CD8-positive, alpha-beta T cell (primary cell): ENCODE measurements at regions of chr17 and their contacts with region 1.

Region 1: DNA sequence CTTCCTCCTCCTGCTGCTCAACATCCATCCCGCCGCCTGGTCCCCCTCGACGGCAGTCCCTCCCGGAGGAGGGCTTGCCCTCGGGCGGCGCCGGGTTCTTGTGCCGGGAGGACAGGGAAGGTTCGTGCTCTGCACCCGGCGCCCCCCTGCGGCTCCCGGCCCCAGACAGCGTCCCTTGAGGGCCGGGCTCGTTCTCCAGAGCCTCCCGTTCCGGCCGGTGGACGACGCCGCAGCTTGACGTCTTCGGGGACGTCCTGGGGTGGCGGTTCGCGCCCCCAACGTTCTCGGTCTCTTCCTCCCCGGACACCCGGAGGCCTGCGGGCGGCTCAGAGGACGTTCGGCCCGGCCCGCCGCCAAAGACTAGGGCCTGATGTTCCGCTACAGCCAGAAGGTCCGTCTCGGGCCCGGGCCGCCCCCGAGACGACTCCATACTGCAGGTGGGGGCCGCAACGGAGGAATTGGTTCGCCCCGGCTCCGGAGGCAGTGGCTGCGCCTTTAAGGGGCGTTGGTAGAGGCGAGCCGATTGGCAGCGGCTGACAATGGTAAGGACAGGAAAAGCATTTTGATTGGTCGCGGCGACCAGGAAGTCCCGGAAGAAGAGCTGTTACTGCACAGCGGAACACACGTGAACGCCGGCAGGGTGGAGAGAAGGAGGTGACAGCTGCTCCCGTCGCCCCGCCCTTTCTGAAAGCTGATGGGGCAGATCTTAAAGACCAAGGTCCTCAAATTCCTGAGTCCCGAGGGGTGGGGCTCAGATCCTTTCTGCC is at the start of gene BORCS6:
- DNase-seq: peak; percentile 87 to 99 (median 93)
- ATAC-seq: peak; percentile 69
- H3K4me3 ChIP-seq: peak within 1 kb of the TSS; percentile 95 to 98
- H3K4me3 Mint-ChIP-seq: peak within 1 kb of the TSS; percentile 1
- H3K27ac ChIP-seq: peak within 1 kb of the TSS; percentile 63 to 93
- H3K27ac Mint-ChIP-seq: peak within 1 kb of the TSS; percentile 94
- H3K4me1 ChIP-seq: peaks cover 38% of the 10 kb centered on the region
- H3K4me1 Mint-ChIP-seq: peaks cover 13% of the 10 kb centered on the region
- H3K27me3 ChIP-seq: no peaks in the 10 kb centered on the region
- H3K27me3 Mint-ChIP-seq: no peaks in the 10 kb centered on the region
- CTCF ChIP-seq: no peak
- total RNA-seq, gene BORCS6: 6.1 to 6.7 TPM

Region 2: DNA sequence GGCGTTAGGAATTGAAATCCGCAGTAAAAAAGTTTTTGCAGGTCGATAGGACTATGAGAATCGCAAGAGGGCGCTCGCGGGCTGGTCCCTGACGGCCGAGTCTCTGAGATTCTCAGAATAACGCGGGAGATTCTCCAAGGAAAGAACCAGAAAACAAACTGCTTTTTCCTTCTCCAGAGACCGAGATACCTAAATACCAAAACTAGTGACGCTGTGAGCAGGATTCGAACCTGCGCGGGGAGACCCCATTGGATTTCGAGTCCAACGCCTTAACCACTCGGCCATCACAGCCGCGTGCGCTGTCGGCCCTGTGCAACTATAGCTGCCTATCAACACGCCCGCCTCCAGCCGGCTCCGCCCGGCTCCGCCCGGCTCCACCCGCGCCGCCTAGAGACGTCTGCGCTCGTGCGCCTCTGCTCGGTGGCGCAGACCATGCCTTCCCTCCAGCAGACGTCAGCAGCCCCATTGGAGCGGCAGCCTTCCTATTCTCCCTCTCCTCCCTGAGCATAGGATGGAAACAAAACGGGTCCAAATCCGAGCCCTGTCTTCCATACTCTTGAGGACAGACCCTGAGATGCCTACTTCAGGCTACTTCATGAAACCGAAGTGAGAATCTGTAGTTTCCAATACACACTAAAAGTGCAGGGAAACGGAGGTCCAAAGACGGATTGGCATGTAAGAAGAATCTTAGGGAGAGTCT is 51.1 kb before region 1 on chr17:
- CTCF ChIA-PET with region 1: interaction called, 29 read pairs
- POLR2A ChIA-PET with region 1: interaction called, 15 read pairs
- intact Hi-C with region 1: loop called (anchors 1 kb)
- DNase-seq: peak; percentile 92 to 98 (median 95)
- ATAC-seq: peak; percentile 84
- H3K4me3 ChIP-seq: peak overlapping the region; percentile 70 to 75
- H3K4me3 Mint-ChIP-seq: no peak overlapping the region
- H3K27ac ChIP-seq: peak overlapping the region; percentile 89 to 97
- H3K27ac Mint-ChIP-seq: no peak overlapping the region
- H3K4me1 ChIP-seq: peaks cover 18% of the 10 kb centered on the region
- H3K4me1 Mint-ChIP-seq: no peaks in the 10 kb centered on the region
- H3K27me3 ChIP-seq: no peaks in the 10 kb centered on the region
- H3K27me3 Mint-ChIP-seq: no peaks in the 10 kb centered on the region
- CTCF ChIP-seq: peak; percentile 87

Region 3: DNA sequence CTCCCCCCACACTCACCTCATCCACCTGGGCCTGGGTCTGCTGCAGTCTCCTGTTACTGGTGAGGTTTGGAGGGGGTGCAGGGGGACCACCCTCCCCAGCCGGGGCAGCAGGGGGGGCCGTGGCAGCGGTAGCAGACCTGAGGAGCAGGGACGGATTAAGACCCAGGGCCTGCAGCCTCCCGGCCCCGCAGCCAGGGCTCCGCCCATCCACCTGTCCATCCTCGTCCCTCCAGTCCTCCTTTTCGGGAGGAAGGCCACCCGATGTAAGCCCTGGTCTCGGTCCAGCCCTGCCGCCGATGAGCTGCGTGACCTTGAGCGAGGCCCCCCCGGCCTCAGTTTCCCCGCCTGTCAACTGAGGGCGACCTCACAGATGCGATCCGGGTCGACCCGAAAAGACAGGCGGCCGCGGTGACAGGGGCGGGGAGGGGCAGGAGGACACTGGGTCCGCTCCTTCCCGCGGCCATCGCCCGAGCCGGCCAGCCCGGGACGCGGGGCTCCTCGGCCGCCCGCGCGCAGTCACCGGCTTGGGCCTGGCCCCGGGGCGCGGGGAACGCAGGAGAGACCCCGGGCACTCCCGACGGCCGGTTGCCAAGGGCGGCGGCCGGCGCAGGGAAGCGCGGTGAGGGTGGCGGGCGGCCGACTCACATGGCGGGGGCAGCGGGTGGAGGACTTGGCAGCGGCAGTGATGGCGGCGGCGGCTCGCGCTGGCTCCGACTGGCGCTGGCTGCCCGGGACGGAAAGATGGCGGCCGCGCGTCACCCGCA is 27.5 kb before region 1 on chr17 and contains the start of gene VAMP2:
- CTCF ChIA-PET with region 1: interaction called, 183 read pairs
- POLR2A ChIA-PET with region 1: interaction called, 32 read pairs
- intact Hi-C with region 1: loop called (anchors 1 kb)
- DNase-seq: peak; percentile 72 to 92 (median 83)
- ATAC-seq: peak; percentile 47
- H3K4me3 ChIP-seq: peak within 1 kb of the TSS; percentile 96 to 99
- H3K4me3 Mint-ChIP-seq: peak within 1 kb of the TSS; percentile 92
- H3K27ac ChIP-seq: peak within 1 kb of the TSS; percentile 99 to 100
- H3K27ac Mint-ChIP-seq: peak within 1 kb of the TSS; percentile 98
- H3K4me1 ChIP-seq: peaks cover 62% of the 10 kb centered on the region
- H3K4me1 Mint-ChIP-seq: peaks cover 64% of the 10 kb centered on the region
- H3K27me3 ChIP-seq: no peaks in the 10 kb centered on the region
- H3K27me3 Mint-ChIP-seq: no peaks in the 10 kb centered on the region
- CTCF ChIP-seq: no peak
- total RNA-seq, gene VAMP2: 302 to 303 TPM

Region 4: DNA sequence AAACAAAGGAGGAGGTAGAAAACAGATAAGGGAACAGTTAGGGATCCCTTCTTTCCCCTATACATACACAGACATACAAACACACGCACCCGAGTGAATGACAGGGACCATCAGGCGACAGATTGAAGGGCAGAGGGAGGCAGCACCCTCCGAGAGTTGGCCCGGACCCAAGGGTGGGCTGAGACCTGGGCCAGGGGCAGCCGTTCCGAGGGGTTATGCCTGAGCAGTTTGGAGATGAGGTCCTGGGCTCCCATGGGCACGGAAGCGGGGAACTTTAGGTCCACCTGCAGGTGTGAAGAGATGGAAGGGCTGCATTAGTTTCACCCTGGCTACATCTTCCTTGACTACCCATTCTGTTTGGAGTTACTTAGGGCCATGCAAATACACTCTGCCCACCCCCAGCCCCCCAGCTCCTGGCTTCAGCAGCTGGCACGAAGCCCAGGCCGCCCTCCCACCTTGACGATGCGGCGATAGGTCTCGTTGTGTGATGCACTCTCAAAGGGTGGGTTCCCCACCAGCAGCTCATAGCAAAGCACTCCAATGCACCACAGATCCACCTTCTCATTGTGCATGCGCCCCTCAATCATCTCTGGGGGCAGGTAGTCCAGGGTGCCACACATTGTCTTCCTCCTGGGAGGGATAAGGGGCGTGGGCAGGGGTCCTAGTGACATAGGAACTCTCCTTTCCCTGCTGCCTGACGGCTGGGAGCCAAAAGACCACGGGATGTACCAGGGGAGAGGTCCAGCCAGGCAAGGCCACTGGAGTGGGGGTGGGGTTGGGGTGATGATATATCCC is 15.1 kb after region 1 on chr17:
- CTCF ChIA-PET with region 1: interaction called, 5 read pairs
- POLR2A ChIA-PET with region 1: interaction called, 30 read pairs
- intact Hi-C with region 1: loop called (anchors 1 kb)
- DNase-seq: no peak
- ATAC-seq: no peak
- H3K4me3 ChIP-seq: no peak overlapping the region
- H3K4me3 Mint-ChIP-seq: no peak overlapping the region
- H3K27ac ChIP-seq: no peak overlapping the region
- H3K27ac Mint-ChIP-seq: no peak overlapping the region
- H3K4me1 ChIP-seq: peaks cover 2% of the 10 kb centered on the region
- H3K4me1 Mint-ChIP-seq: peaks cover 7% of the 10 kb centered on the region
- H3K27me3 ChIP-seq: no peaks in the 10 kb centered on the region
- H3K27me3 Mint-ChIP-seq: no peaks in the 10 kb centered on the region
- CTCF ChIP-seq: no peak

Region 5: GRCh38 chr17:8288336-8289102 is 98.6 kb after region 1 on chr17 and contains the start of gene RANGRF:
- CTCF ChIA-PET with region 1: no interaction called
- POLR2A ChIA-PET with region 1: interaction called, 3 read pairs
- intact Hi-C with region 1: loop called in 1 of 2 experiments (anchors 1 kb)
- DNase-seq: peak; percentile 38 to 89 (median 79)
- ATAC-seq: peak; percentile 94
- H3K4me3 ChIP-seq: peak within 1 kb of the TSS; percentile 73 to 82
- H3K4me3 Mint-ChIP-seq: peak within 1 kb of the TSS; percentile 97
- H3K27ac ChIP-seq: peak within 1 kb of the TSS; percentile 77 to 89
- H3K27ac Mint-ChIP-seq: peak within 1 kb of the TSS; percentile 97
- H3K4me1 ChIP-seq: peaks cover 17% of the 10 kb centered on the region
- H3K4me1 Mint-ChIP-seq: peaks cover 39% of the 10 kb centered on the region
- H3K27me3 ChIP-seq: no peaks in the 10 kb centered on the region
- H3K27me3 Mint-ChIP-seq: no peaks in the 10 kb centered on the region
- CTCF ChIP-seq: no peak
- total RNA-seq, gene RANGRF: 18.9 to 20.2 TPM

Region 6: DNA sequence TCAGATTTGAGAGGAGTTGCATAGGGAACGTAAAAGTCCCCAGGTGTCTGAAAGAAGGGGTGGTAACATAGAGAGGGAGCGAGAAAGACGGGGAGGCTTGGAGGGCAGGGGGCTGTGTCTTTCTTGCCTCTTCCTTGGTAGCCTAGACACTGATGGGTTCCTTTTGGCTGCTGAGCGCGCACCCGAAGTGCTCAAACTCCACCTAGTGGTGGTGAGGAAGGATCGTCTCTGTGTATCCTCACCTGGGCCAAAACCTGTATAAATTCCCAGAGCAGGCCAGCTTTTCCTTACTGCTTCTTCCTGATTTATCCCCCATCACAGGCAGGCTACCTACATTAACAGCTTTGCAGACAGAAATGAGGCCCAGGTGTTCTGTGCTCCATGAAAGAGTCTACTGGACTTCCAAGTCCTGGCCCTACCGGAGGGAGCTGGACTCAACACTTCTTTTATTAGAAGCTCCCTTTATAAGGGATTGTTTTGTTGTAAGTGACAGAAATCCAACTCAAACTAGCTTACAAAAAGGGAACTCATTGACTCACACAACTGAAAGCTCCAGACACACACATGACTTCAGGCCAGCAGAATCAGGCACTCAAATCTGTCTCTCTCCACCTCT is 110.8 kb after region 1 on chr17:
- CTCF ChIA-PET with region 1: interaction called, 10 read pairs
- POLR2A ChIA-PET with region 1: interaction called, 13 read pairs
- intact Hi-C with region 1: loop called in 1 of 2 experiments (anchors 1 kb)
- DNase-seq: peak; percentile 29 to 86 (median 63)
- ATAC-seq: peak; percentile 93
- H3K4me3 ChIP-seq: no peak overlapping the region
- H3K4me3 Mint-ChIP-seq: no peak overlapping the region
- H3K27ac ChIP-seq: no peak overlapping the region
- H3K27ac Mint-ChIP-seq: peak overlapping the region; percentile 55
- H3K4me1 ChIP-seq: peaks cover 4% of the 10 kb centered on the region
- H3K4me1 Mint-ChIP-seq: peaks cover 9% of the 10 kb centered on the region
- H3K27me3 ChIP-seq: no peaks in the 10 kb centered on the region
- H3K27me3 Mint-ChIP-seq: no peaks in the 10 kb centered on the region
- CTCF ChIP-seq: peak; percentile 76